ENCODE measurements at regions of chr1 and their contacts with region 1.

Region 1: GRCh38 chr1:20493839-20494608 is 8.0 kb upstream of the CAMK2N1 start:
- DNase-seq: peak; percentile 88
- H3K4me3 Mint-ChIP-seq: no peak overlapping the region
- H3K27ac Mint-ChIP-seq: no peak overlapping the region
- H3K4me1 Mint-ChIP-seq: no peaks in the 10 kb centered on the region
- H3K27me3 Mint-ChIP-seq: peaks cover 47% of the 10 kb centered on the region

Region 2: GRCh38 chr1:20212685-20213331 is 281.2 kb before region 1 on chr1:
- CTCF ChIA-PET with region 1: interaction called, 25 read pairs
- DNase-seq: peak; percentile 62
- H3K4me3 Mint-ChIP-seq: no peak overlapping the region
- H3K27ac Mint-ChIP-seq: no peak overlapping the region
- H3K4me1 Mint-ChIP-seq: peaks cover 2% of the 10 kb centered on the region
- H3K27me3 Mint-ChIP-seq: peaks cover 65% of the 10 kb centered on the region

Region 3: GRCh38 chr1:20361806-20362640 is 132.0 kb before region 1 on chr1:
- CTCF ChIA-PET with region 1: interaction called, 22 read pairs
- DNase-seq: peak; percentile 55
- H3K4me3 Mint-ChIP-seq: no peak overlapping the region
- H3K27ac Mint-ChIP-seq: no peak overlapping the region
- H3K4me1 Mint-ChIP-seq: peaks cover 6% of the 10 kb centered on the region
- H3K27me3 Mint-ChIP-seq: peaks cover 89% of the 10 kb centered on the region

Region 4: GRCh38 chr1:20505488-20505887 is 11.5 kb after region 1 on chr1:
- CTCF ChIA-PET with region 1: interaction called, 24 read pairs
- DNase-seq: no peak
- H3K4me3 Mint-ChIP-seq: no peak overlapping the region
- H3K27ac Mint-ChIP-seq: no peak overlapping the region
- H3K4me1 Mint-ChIP-seq: peaks cover 30% of the 10 kb centered on the region
- H3K27me3 Mint-ChIP-seq: no peaks in the 10 kb centered on the region